ENCODE measurements at regions of chr4 and their contacts with region 1.

Region 1: GRCh38 chr4:98995183-98996055 is at the start of gene METAP1:
- DNase-seq: peak; percentile 94 to 97 (median 96)
- ATAC-seq: peak; percentile 92 to 97 (median 96)
- H3K4me3 ChIP-seq: peak within 1 kb of the TSS; percentile 89 to 99 (median 96)
- H3K27ac ChIP-seq: peak within 1 kb of the TSS; percentile 88 to 96 (median 92)
- H3K4me1 ChIP-seq: peaks cover 0 to 26% (median 15%) of the 10 kb centered on the region in 12 donors
- H3K27me3 ChIP-seq: no peaks in the 10 kb centered on the region
- CTCF ChIP-seq: peak; percentile 32 to 80 (median 56)
- POLR2A ChIP-seq: peak; percentile 26 to 69
- total RNA-seq, gene METAP1: 51.8 to 71.4 (median 63.6) TPM

Region 2: GRCh38 chr4:98658287-98659105 is 336.9 kb before region 1 on chr4 and contains the start of gene TSPAN5:
- intact Hi-C with region 1: loop called in 1 of 10 experiments (anchors 10 kb)
- DNase-seq: peak; percentile 78 to 90 (median 86)
- ATAC-seq: peak; percentile 87 to 97 (median 92)
- H3K4me3 ChIP-seq: peak within 1 kb of the TSS; percentile 58 to 98 (median 70)
- H3K27ac ChIP-seq: peak within 1 kb of the TSS in 9 of 12 donors; percentile 56 to 80 (median 76)
- H3K4me1 ChIP-seq: peaks cover 0 to 46% (median 13%) of the 10 kb centered on the region in 12 donors
- H3K27me3 ChIP-seq: peaks cover 0 to 14% (median 0%) of the 10 kb centered on the region in 9 donors
- CTCF ChIP-seq: no peak
- POLR2A ChIP-seq: no peak
- total RNA-seq, gene TSPAN5: 1.6 to 10.2 (median 5.6) TPM

Region 3: GRCh38 chr4:98771959-98772632 is 223.3 kb before region 1 on chr4:
- intact Hi-C with region 1: no loop called
- DNase-seq: no peak
- ATAC-seq: no peak
- H3K4me3 ChIP-seq: no peak overlapping the region
- H3K27ac ChIP-seq: no peak overlapping the region
- H3K4me1 ChIP-seq: no peaks in the 10 kb centered on the region
- H3K27me3 ChIP-seq: no peaks in the 10 kb centered on the region
- CTCF ChIP-seq: no peak
- POLR2A ChIP-seq: no peak

Region 4: DNA sequence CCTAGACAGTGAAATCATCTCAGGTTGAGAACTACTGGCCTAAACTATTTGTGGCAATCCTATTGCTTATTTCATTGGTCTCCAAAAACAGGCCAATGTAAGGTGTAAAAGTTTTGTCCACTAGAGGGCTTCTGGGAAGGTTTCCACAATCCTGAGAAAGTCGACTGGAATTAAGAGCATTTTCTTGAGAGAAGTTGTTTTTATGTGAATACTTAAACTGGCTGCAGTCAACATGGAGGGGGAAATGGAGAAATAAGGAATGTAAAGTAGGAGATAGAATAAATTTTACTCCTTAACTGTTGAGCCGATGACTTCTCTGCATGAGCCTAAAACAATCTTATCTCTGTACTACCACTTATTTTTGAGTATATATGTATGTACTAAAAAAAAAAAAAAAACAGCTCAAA is 55.5 kb before region 1 on chr4:
- intact Hi-C with region 1: loop called in 2 of 10 experiments (anchors 5 to 10 kb)
- DNase-seq: no peak
- ATAC-seq: peak in 3 of 4 donors; percentile 42 to 55 (median 45)
- H3K4me3 ChIP-seq: no peak overlapping the region
- H3K27ac ChIP-seq: no peak overlapping the region
- H3K4me1 ChIP-seq: no peaks in the 10 kb centered on the region
- H3K27me3 ChIP-seq: no peaks in the 10 kb centered on the region
- CTCF ChIP-seq: peak; percentile 58 to 82 (median 70)
- POLR2A ChIP-seq: no peak

Region 5: GRCh38 chr4:99088481-99089365 is 93.3 kb after region 1 on chr4 and contains the start of gene ADH5:
- intact Hi-C with region 1: loop called in 4 of 10 experiments (anchors 1 to 10 kb)
- DNase-seq: peak; percentile 90 to 94 (median 93)
- ATAC-seq: peak; percentile 98 to 100 (median 98)
- H3K4me3 ChIP-seq: peak within 1 kb of the TSS; percentile 37 to 88 (median 69)
- H3K27ac ChIP-seq: peak within 1 kb of the TSS; percentile 84 to 96 (median 92)
- H3K4me1 ChIP-seq: peaks cover 0 to 57% (median 30%) of the 10 kb centered on the region in 12 donors
- H3K27me3 ChIP-seq: no peaks in the 10 kb centered on the region
- CTCF ChIP-seq: no peak
- POLR2A ChIP-seq: peak in 1 of 2 donors; percentile 82
- total RNA-seq, gene ADH5: 122 to 246 (median 145) TPM